ENCODE measurements at regions of chr4 and their contacts with region 1.

Region 1: GRCh38 chr4:139501927-139502899 is 48.3 kb downstream of the RAB33B start:
- DNase-seq: no peak
- H3K4me3 ChIP-seq: no peak overlapping the region
- CTCF ChIP-seq: no peak

Region 2: GRCh38 chr4:139484783-139485318 is 17.4 kb before region 1 on chr4:
- CTCF ChIA-PET with region 1: interaction called, 40 read pairs
- POLR2A ChIA-PET with region 1: no interaction called
- DNase-seq: no peak
- H3K4me3 ChIP-seq: no peak overlapping the region
- CTCF ChIP-seq: no peak

Region 3: DNA sequence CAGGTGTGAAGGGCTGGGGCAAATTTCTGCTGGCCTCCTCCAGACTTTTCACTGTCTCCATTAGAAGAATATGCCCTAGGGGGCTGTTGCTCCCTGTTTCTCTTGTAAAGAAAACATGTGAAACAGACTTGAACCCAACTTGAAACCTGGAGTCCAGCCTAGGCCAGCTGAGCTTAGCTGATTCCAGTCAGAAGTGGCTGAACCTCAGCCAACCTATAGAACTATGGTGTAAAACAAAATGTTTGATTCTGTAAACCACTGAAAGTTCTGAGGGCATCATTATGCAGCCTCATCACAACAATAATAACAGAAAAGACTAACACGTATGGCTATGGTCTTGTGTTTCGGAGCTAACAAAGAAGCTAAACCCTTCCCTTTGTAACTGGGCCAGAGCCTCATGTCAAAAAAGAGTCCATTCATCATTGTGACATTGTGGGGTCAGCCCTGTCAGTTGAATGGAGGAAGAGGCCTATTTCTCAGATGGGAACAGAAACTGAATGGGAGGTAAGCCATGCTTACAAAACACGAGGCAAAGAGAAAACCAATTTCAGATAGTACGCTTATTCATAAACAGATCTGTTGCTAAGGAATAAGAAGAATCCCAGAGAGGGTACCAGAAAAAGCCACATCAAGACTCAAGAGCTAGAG is 19.7 kb after region 1 on chr4:
- CTCF ChIA-PET with region 1: interaction called, 20 read pairs
- POLR2A ChIA-PET with region 1: no interaction called
- DNase-seq: no peak
- H3K4me3 ChIP-seq: no peak overlapping the region
- CTCF ChIP-seq: no peak

Region 4: DNA sequence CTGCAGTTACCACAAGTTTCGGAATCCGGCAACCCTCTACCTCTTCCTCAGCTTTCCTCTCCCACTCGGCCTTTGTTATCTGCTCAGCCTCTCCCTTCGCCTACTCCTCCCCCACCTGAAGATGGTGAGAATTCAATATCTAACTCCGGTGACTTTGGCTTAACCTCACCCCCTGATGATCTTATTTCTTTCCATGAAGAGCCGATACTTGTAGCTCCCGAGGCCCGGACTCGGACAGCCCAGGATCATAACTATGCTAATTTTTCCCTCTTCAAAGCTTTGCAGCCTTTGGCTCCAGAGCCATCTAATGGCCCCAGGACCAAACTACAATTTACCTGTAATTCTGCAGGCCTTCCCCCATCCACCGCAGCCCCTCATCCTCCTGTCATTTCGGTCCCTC is 131.4 kb after region 1 on chr4:
- CTCF ChIA-PET with region 1: interaction called, 14 read pairs
- POLR2A ChIA-PET with region 1: no interaction called
- DNase-seq: no peak
- H3K4me3 ChIP-seq: no peak overlapping the region
- CTCF ChIP-seq: peak; percentile 41

Region 5: GRCh38 chr4:139656614-139657486 is 154.6 kb after region 1 on chr4:
- CTCF ChIA-PET with region 1: interaction called, 37 read pairs
- POLR2A ChIA-PET with region 1: no interaction called
- DNase-seq: no peak
- H3K4me3 ChIP-seq: no peak overlapping the region
- CTCF ChIP-seq: peak; percentile 86

Region 6: GRCh38 chr4:139783741-139784484 is 281.7 kb after region 1 on chr4:
- CTCF ChIA-PET with region 1: no interaction called
- POLR2A ChIA-PET with region 1: no interaction called
- DNase-seq: no peak
- H3K4me3 ChIP-seq: no peak overlapping the region
- CTCF ChIP-seq: no peak

Region 7: DNA sequence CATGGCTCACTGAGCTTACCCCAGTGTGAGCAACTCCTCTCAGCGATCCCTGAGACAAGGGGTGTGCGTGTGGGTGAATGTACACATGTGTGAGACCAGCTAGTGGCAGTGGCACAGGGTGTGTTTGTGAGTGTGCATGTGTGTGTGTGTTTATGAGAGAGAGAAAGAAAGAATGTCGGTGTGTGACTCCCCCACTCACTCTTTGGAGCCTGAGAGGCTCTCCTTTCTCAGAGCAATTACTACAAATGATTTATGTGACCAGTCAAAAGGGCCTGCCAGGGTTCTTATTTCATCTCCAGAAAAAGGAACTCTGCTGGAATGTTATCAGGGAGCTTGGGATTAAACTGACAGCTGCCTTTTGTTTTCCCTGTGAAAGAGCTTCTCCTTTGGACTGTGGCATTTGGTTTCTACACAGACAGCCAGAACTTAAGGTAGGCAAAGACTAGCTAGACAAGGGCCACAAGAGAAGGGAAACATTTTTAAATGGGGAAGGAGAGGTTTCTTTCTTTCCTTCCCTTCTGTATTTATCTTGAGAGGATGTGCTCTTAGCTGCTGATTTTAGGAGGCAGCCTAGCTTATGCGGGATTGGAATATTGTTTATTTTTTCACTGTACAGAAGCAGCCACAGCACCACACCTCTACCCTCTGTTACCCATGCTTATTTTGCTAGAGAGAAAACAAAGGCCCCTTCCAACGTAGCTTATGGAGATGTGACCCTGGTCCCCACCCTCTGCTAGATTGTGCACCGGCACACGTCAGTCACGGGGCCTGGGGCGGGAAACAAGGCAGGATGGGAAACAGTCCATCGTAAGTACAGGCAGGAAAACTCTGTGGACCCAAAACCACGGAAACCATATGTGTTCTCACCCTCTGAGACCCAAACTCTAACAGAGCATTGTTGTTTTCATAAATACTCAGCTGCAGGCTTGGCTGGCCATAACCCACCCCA is 306.9 kb after region 1 on chr4:
- CTCF ChIA-PET with region 1: no interaction called
- POLR2A ChIA-PET with region 1: no interaction called
- DNase-seq: no peak
- H3K4me3 ChIP-seq: no peak overlapping the region
- CTCF ChIP-seq: no peak